GM13976 (cell line): ENCODE measurements at regions of chr4 and their contacts with region 1.

Region 1: DNA sequence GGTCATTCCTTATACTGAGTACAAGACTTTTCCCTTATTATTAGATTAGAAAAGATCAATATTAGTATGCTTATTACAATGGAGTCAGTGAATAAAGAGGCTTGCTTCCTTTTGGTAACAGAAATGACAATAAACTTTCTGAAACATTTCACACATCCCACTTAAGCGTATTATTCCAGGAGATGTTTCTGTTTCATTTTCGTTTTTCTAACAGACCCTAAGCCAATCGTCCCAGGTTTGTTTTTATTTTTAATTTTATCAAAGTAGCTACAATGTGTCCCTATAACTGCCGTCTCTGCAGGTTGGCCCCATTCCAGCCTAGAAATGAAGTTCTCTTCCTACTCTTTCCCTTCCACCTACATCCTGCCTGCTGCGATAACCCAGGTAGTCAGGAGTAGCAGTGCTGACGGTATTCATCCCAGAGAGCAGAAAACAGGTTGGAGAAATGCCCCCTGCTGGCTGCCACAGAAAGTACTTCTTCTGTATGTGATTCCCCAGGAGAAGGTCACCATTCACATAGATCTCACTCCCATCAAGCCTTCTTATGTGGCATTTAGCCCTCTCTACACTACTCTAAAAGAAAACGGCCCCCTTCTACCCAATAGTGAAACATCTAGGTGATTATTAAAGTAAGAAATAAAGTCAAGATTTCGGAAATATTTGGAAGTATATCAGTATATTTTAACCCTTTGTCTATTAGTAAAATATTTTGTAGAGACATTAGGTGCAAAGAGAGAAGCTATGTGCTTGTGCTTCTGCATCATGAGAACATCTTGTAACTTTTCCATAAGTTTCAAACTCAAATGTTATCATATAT is 40.4 kb downstream of the ENPEP start:
- DNase-seq: peak; percentile 30
- CTCF ChIP-seq: peak; percentile 73

Region 2: GRCh38 chr4:109406338-109406931 is 1109.9 kb before region 1 on chr4:
- in situ Hi-C with region 1: loop called (anchors 25 kb)
- DNase-seq: peak; percentile 50
- CTCF ChIP-seq: peak; percentile 50

Region 3: GRCh38 chr4:109998867-109999584 is 517.3 kb before region 1 on chr4:
- in situ Hi-C with region 1: loop called (anchors 5 kb)
- DNase-seq: peak; percentile 67
- CTCF ChIP-seq: peak; percentile 57

Region 4: GRCh38 chr4:110211007-110211769 is 305.1 kb before region 1 on chr4:
- in situ Hi-C with region 1: loop called (anchors 25 kb)
- DNase-seq: peak; percentile 70
- CTCF ChIP-seq: peak; percentile 46